ENCODE measurements at regions of chr7 and their contacts with region 1.

Region 1: DNA sequence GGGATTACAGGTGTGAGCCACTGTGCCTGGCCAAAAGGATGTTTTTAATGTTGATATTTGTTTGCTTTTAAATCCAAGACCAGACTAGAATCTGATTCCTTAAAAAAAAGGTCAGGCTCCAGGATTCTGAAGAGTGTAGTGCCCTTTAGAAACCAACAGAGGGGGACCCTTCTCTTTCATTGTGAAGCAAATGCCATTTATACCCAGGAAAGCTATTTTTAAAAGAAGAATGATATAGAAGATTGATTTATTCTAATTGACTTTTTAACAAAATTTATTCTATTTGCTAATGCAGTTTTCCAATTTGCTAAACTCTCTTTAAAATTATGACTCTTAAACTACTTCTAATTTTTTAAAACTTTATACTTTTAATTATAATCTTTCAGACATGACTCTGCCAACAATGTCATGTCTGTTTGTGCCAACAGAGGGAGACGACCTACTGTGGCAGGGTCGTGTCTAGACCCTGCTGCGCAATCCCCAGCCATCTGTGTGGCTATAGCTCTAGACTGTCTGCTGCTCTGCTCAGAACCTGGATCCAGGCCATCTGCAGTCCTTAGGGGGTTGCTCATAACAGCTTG is 201.0 kb upstream of the IMMP2L start:
- DNase-seq: peak; percentile 63
- H3K4me3 Mint-ChIP-seq: no peak overlapping the region
- H3K27ac Mint-ChIP-seq: no peak overlapping the region
- H3K4me1 Mint-ChIP-seq: no peaks in the 10 kb centered on the region
- H3K27me3 Mint-ChIP-seq: no peaks in the 10 kb centered on the region
- CTCF ChIP-seq: peak; percentile 50

Region 2: GRCh38 chr7:111741811-111742240 is 21.5 kb before region 1 on chr7:
- CTCF ChIA-PET with region 1: interaction called, 13 read pairs
- POLR2A ChIA-PET with region 1: no interaction called
- intact Hi-C with region 1: no loop called
- DNase-seq: peak; percentile 78
- H3K4me3 Mint-ChIP-seq: no peak overlapping the region
- H3K27ac Mint-ChIP-seq: no peak overlapping the region
- H3K4me1 Mint-ChIP-seq: no peaks in the 10 kb centered on the region
- H3K27me3 Mint-ChIP-seq: no peaks in the 10 kb centered on the region
- CTCF ChIP-seq: peak; percentile 64

Region 3: GRCh38 chr7:111867348-111867931 is 104.1 kb after region 1 on chr7:
- CTCF ChIA-PET with region 1: interaction called, 12 read pairs
- POLR2A ChIA-PET with region 1: no interaction called
- intact Hi-C with region 1: no loop called
- DNase-seq: no peak
- H3K4me3 Mint-ChIP-seq: no peak overlapping the region
- H3K27ac Mint-ChIP-seq: no peak overlapping the region
- H3K4me1 Mint-ChIP-seq: peaks cover 7% of the 10 kb centered on the region
- H3K27me3 Mint-ChIP-seq: no peaks in the 10 kb centered on the region
- CTCF ChIP-seq: no peak